ENCODE measurements at regions of chr13 and their contacts with region 1.

Region 1: DNA sequence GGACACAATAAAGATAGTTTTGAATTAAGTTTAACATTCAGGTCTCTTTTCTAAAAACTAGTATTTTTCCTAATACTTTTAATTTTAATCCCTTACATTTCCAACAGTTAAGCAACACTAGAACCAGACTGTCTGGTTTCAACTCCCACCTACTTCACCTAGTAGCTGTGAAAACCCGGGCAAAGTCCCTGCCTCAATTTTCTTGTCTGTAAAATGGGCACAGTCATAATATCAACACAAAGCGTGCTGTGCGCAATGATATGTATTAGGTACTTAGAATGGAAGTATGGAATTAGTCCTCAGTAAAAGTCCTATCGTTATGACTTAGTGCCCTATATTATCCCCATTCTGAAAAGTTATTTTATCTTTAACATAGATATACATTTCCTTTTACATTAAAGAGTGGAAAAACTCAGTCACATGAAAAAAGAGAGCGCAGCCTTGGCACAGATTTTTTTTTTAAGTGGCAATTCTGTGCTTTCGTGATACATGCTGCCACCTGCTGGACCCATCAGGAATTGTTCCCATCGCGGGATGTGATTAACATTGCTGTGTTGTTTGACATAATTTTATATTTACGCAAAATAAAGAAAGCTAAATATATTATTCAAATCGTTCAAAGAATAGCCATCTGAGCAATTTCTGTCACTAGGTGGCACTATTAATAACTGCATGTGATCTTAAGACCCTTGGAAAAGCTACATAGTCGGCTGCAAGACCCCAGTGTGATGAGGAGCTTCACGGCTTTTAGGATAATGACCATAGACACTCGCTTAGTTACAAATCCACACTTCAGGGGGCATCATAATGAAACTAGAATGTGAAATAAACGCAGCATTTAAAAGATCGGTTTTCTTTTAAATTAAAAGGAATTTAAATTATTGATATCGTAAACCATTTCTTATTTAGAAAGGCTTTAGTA is 59.9 kb downstream of the LIG4 start:
- DNase-seq: peak; percentile 67
- H3K4me3 Mint-ChIP-seq: no peak overlapping the region
- H3K27ac Mint-ChIP-seq: no peak overlapping the region
- H3K4me1 Mint-ChIP-seq: no peaks in the 10 kb centered on the region
- H3K27me3 Mint-ChIP-seq: no peaks in the 10 kb centered on the region
- CTCF ChIP-seq: peak; percentile 69

Region 2: GRCh38 chr13:107124129-107124718 is 1031.2 kb before region 1 on chr13:
- CTCF ChIA-PET with region 1: no interaction called
- POLR2A ChIA-PET with region 1: no interaction called
- intact Hi-C with region 1: no loop called
- DNase-seq: peak; percentile 45
- H3K4me3 Mint-ChIP-seq: no peak overlapping the region
- H3K27ac Mint-ChIP-seq: no peak overlapping the region
- H3K4me1 Mint-ChIP-seq: peaks cover 6% of the 10 kb centered on the region
- H3K27me3 Mint-ChIP-seq: no peaks in the 10 kb centered on the region
- CTCF ChIP-seq: peak; percentile 58

Region 3: GRCh38 chr13:107203146-107203847 is 952.1 kb before region 1 on chr13:
- CTCF ChIA-PET with region 1: interaction called, 85 read pairs
- POLR2A ChIA-PET with region 1: no interaction called
- intact Hi-C with region 1: no loop called
- DNase-seq: peak; percentile 30
- H3K4me3 Mint-ChIP-seq: no peak overlapping the region
- H3K27ac Mint-ChIP-seq: no peak overlapping the region
- H3K4me1 Mint-ChIP-seq: peaks cover 15% of the 10 kb centered on the region
- H3K27me3 Mint-ChIP-seq: peaks cover 21% of the 10 kb centered on the region
- CTCF ChIP-seq: peak; percentile 33

Region 4: DNA sequence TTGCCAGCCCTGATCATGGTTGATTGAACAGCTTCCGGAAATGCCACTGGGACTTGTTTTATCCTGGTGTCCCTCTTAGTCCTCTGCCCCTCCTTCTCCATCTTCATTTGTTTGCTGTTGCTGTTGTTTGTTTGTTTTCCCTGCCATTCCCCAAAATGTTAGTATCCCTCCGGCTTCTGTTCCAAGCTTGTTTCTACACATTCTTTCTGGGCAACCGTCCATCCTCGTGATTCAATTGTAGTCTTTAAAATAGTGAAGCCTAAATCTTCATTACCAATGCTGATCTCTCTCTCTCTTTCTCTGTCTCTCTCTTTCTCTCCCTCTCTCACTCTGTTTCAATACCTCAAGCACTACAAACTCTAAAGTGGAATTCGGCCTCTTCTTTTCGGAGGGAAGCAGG is 938.2 kb before region 1 on chr13:
- CTCF ChIA-PET with region 1: interaction called, 85 read pairs
- POLR2A ChIA-PET with region 1: no interaction called
- intact Hi-C with region 1: no loop called
- DNase-seq: peak; percentile 6
- H3K4me3 Mint-ChIP-seq: no peak overlapping the region
- H3K27ac Mint-ChIP-seq: no peak overlapping the region
- H3K4me1 Mint-ChIP-seq: no peaks in the 10 kb centered on the region
- H3K27me3 Mint-ChIP-seq: no peaks in the 10 kb centered on the region
- CTCF ChIP-seq: no peak

Region 5: DNA sequence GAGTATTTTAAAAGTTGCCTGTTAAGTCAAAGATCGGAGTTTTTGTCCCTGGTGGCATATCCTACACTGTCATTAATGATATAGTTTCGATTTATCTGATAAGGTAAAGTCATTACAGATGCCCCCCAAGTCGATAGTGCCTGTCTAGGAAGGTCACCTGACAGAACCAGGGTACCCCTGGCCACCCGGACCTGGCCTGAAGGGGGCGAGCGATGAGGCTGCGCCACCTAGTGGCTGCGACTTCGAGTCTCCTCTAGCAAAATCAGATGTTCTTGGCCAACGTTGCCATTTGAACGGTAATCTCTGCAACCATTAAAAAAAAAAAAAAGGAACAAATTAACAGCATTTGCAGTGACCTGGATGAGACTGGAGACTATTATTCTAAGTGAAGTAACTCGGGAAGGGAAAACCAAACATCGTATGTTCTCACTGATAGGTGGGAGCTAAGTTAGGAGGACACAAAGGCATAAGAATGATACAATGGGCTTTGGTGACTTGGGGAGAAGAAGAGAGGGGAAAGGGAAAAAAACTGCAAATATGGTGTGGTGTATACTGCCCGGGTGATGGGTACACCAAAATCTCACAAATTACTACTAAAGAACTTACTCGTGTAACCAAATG is 505.3 kb before region 1 on chr13:
- CTCF ChIA-PET with region 1: interaction called, 12 read pairs
- POLR2A ChIA-PET with region 1: no interaction called
- intact Hi-C with region 1: loop called (anchors 10 kb)
- DNase-seq: peak; percentile 57
- H3K4me3 Mint-ChIP-seq: peak overlapping the region; percentile 19
- H3K27ac Mint-ChIP-seq: no peak overlapping the region
- H3K4me1 Mint-ChIP-seq: no peaks in the 10 kb centered on the region
- H3K27me3 Mint-ChIP-seq: peaks cover 11% of the 10 kb centered on the region
- CTCF ChIP-seq: peak; percentile 63

Region 6: GRCh38 chr13:107721125-107721869 is 434.1 kb before region 1 on chr13:
- CTCF ChIA-PET with region 1: no interaction called
- POLR2A ChIA-PET with region 1: no interaction called
- intact Hi-C with region 1: no loop called
- DNase-seq: no peak
- H3K4me3 Mint-ChIP-seq: no peak overlapping the region
- H3K27ac Mint-ChIP-seq: no peak overlapping the region
- H3K4me1 Mint-ChIP-seq: no peaks in the 10 kb centered on the region
- H3K27me3 Mint-ChIP-seq: no peaks in the 10 kb centered on the region
- CTCF ChIP-seq: no peak

Region 7: DNA sequence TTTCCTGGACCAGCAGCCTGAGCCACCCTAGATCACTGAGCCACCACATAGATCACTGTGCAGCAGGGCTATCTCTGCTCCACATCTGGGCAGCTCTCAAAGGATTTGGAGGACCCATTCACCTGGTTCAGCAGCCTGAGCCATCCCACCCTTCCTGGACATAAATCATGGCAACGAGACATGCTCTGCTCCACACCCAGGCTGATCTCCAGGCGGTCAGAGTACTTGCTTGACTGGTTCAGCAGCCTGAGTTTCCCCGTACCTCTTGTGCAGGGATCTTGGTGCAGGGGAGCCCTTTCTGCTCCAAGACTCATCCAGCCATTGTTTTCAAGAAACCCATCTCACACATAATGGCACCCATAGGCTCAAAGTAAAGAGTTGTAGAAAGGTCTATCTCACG is 135.4 kb before region 1 on chr13:
- CTCF ChIA-PET with region 1: no interaction called
- POLR2A ChIA-PET with region 1: no interaction called
- intact Hi-C with region 1: no loop called
- DNase-seq: no peak
- H3K4me3 Mint-ChIP-seq: no peak overlapping the region
- H3K27ac Mint-ChIP-seq: no peak overlapping the region
- H3K4me1 Mint-ChIP-seq: no peaks in the 10 kb centered on the region
- H3K27me3 Mint-ChIP-seq: no peaks in the 10 kb centered on the region
- CTCF ChIP-seq: no peak

Region 8: GRCh38 chr13:108166078-108166477 is 10.6 kb after region 1 on chr13:
- CTCF ChIA-PET with region 1: interaction called, 18 read pairs
- POLR2A ChIA-PET with region 1: interaction called, 3 read pairs
- intact Hi-C with region 1: no loop called
- DNase-seq: no peak
- H3K4me3 Mint-ChIP-seq: no peak overlapping the region
- H3K27ac Mint-ChIP-seq: no peak overlapping the region
- H3K4me1 Mint-ChIP-seq: no peaks in the 10 kb centered on the region
- H3K27me3 Mint-ChIP-seq: no peaks in the 10 kb centered on the region
- CTCF ChIP-seq: no peak

Region 9: GRCh38 chr13:108190897-108191296 is 35.5 kb after region 1 on chr13:
- CTCF ChIA-PET with region 1: interaction called, 11 read pairs
- POLR2A ChIA-PET with region 1: no interaction called
- intact Hi-C with region 1: no loop called
- DNase-seq: no peak
- H3K4me3 Mint-ChIP-seq: no peak overlapping the region
- H3K27ac Mint-ChIP-seq: no peak overlapping the region
- H3K4me1 Mint-ChIP-seq: peaks cover 6% of the 10 kb centered on the region
- H3K27me3 Mint-ChIP-seq: no peaks in the 10 kb centered on the region
- CTCF ChIP-seq: no peak

Region 10: DNA sequence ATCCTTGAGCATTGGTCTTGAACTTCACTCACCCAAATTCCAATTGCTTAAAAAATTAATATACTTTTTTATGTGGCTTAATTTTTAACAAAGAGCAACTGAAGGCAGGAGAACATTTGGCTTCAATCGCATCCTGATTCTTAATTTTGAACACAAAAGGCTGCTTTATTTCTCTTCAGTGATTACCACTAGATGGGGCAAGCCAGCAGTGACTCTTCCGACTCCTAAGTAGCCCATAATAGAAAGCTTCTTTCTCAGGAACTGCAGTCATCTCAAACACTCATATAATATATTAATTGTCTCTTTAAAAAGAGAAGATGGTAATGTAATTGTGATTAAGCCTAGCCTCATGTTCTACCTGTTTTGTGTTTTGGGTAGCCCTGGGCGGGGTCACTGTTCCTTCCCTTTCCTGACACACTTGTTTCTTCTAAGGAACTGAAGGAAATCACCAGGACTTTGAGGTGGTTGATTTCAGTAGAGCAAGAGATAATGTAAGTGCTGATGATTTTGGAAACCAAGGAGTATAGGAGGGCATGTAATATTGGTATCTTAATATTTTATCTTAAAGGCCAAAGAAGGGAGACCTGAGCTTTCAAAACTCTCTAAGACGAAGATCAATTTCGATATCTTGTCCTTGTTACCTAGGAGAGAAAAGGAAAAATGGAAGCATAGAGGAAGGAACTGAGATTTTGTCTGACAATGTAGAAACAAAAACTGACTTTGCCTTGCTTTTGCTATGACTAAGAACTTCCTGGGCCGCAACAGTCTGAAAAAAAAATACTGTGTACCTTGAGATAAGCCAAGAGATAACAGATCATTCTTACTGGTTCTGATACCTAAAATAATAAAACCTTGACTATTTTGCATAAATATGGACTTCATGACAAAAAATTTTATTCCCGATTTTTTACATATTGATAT is 187.2 kb after region 1 on chr13:
- CTCF ChIA-PET with region 1: no interaction called
- POLR2A ChIA-PET with region 1: no interaction called
- intact Hi-C with region 1: no loop called
- DNase-seq: peak; percentile 52
- H3K4me3 Mint-ChIP-seq: no peak overlapping the region
- H3K27ac Mint-ChIP-seq: no peak overlapping the region
- H3K4me1 Mint-ChIP-seq: no peaks in the 10 kb centered on the region
- H3K27me3 Mint-ChIP-seq: peaks cover 90% of the 10 kb centered on the region
- CTCF ChIP-seq: peak; percentile 47

Measured in MCF 10A (cell line).